WTC11 (cell line): ENCODE measurements at regions of chr10 and their contacts with region 1.

Region 1: DNA sequence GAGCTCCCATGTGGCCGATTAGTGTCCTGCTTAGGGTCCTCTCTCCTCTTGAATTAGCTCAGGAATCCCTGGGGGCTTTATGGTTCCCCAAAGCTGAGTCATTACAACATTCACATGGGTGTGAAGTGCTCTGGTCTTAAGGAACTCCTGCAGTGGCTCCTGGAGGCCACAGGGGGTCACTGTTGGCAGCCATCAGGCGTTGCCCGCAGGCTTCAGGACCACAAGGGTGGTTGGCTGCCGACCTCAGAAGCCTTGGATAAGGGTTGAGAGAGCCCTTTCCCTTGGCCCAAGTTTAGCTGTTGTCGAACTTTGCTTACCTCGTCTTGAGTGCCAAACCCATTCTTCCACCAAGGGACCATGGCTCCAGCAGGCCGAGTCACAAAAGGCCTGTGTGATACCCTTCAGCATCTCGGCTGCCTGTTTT is 61.7 kb downstream of the SH2D4B start:
- DNase-seq: peak; percentile 78
- ATAC-seq: peak; percentile 93
- H3K4me3 Mint-ChIP-seq: no peak overlapping the region
- H3K27ac Mint-ChIP-seq: no peak overlapping the region
- H3K4me1 Mint-ChIP-seq: 0 out of 2 replicates have a peak, but pooled peaks cover 5% of the 10 kb centered on the region
- H3K27me3 Mint-ChIP-seq: no peaks in the 10 kb centered on the region
- CTCF ChIP-seq: peak; percentile 83

Region 2: GRCh38 chr10:80408242-80409101 is 191.0 kb before region 1 on chr10 and contains the start of gene PRXL2A:
- CTCF ChIA-PET with region 1: interaction called, 12 read pairs
- POLR2A ChIA-PET with region 1: no interaction called
- DNase-seq: peak; percentile 94
- ATAC-seq: peak; percentile 95
- H3K4me3 Mint-ChIP-seq: peak within 1 kb of the TSS; percentile 88
- H3K27ac Mint-ChIP-seq: peak within 1 kb of the TSS; percentile 60
- H3K4me1 Mint-ChIP-seq: peaks cover 44% of the 10 kb centered on the region
- H3K27me3 Mint-ChIP-seq: peaks cover 26% of the 10 kb centered on the region
- CTCF ChIP-seq: no peak
- total RNA-seq, gene PRXL2A: 46.6 to 56.5 TPM (median 52.4 TPM) in 3 replicates

Region 3: GRCh38 chr10:80464557-80465450 is 134.6 kb before region 1 on chr10:
- CTCF ChIA-PET with region 1: interaction called, 16 read pairs
- POLR2A ChIA-PET with region 1: no interaction called
- DNase-seq: peak; percentile 71
- ATAC-seq: peak; percentile 76
- H3K4me3 Mint-ChIP-seq: peak overlapping the region; percentile 63
- H3K27ac Mint-ChIP-seq: peak overlapping the region; percentile 95
- H3K4me1 Mint-ChIP-seq: peaks cover 91% of the 10 kb centered on the region
- H3K27me3 Mint-ChIP-seq: peaks cover 39% of the 10 kb centered on the region
- CTCF ChIP-seq: no peak

Region 4: GRCh38 chr10:80552151-80552646 is 47.2 kb before region 1 on chr10:
- CTCF ChIA-PET with region 1: interaction called, 24 read pairs
- POLR2A ChIA-PET with region 1: no interaction called
- DNase-seq: peak; percentile 27
- ATAC-seq: peak; percentile 76
- H3K4me3 Mint-ChIP-seq: no peak overlapping the region
- H3K27ac Mint-ChIP-seq: no peak overlapping the region
- H3K4me1 Mint-ChIP-seq: peaks cover 18% of the 10 kb centered on the region
- H3K27me3 Mint-ChIP-seq: no peaks in the 10 kb centered on the region
- CTCF ChIP-seq: no peak

Region 5: GRCh38 chr10:80583685-80584084 is 15.8 kb before region 1 on chr10:
- CTCF ChIA-PET with region 1: interaction called, 32 read pairs
- POLR2A ChIA-PET with region 1: no interaction called
- DNase-seq: no peak
- ATAC-seq: no peak
- H3K4me3 Mint-ChIP-seq: no peak overlapping the region
- H3K27ac Mint-ChIP-seq: no peak overlapping the region
- H3K4me1 Mint-ChIP-seq: peaks cover 8% of the 10 kb centered on the region
- H3K27me3 Mint-ChIP-seq: no peaks in the 10 kb centered on the region; the same call in 1 of the 2 replicates
- CTCF ChIP-seq: no peak

Region 6: DNA sequence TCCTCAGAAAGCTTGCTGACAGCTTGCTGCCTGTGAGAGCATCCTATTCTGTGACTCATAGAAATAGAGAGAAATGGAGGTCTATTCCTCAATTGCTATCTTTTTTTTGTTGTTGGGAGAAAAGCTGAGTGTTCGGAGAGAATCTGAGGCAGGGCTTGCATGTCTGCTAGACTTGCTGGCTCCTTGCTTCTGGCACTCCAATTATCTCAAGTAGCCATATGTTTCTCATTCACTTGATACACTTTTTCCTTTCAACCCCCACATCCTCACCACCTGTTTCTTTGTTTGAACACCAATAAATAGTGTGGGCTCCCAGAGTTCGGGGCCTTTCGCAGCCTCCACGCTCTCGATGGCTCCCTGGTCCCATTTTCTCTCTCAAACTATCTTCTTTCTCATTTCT is 110.4 kb after region 1 on chr10:
- CTCF ChIA-PET with region 1: no interaction called
- POLR2A ChIA-PET with region 1: no interaction called
- DNase-seq: no peak
- ATAC-seq: no peak
- H3K4me3 Mint-ChIP-seq: no peak overlapping the region
- H3K27ac Mint-ChIP-seq: no peak overlapping the region
- H3K4me1 Mint-ChIP-seq: peaks cover 17% of the 10 kb centered on the region
- H3K27me3 Mint-ChIP-seq: no peaks in the 10 kb centered on the region
- CTCF ChIP-seq: no peak

Region 7: GRCh38 chr10:80769700-80770160 is 170.3 kb after region 1 on chr10:
- CTCF ChIA-PET with region 1: no interaction called
- POLR2A ChIA-PET with region 1: no interaction called
- DNase-seq: no peak
- ATAC-seq: peak; percentile 38
- H3K4me3 Mint-ChIP-seq: no peak overlapping the region
- H3K27ac Mint-ChIP-seq: no peak overlapping the region
- H3K4me1 Mint-ChIP-seq: peaks cover 17% of the 10 kb centered on the region
- H3K27me3 Mint-ChIP-seq: no peaks in the 10 kb centered on the region
- CTCF ChIP-seq: no peak